ENCODE measurements at regions of chr3 and their contacts with region 1.

Region 1: GRCh38 chr3:5057857-5058324 is 64.2 kb upstream of the ARL8B start:
- DNase-seq: peak; percentile 75
- ATAC-seq: peak; percentile 93
- H3K4me3 ChIP-seq: no peak overlapping the region
- H3K27ac ChIP-seq: no peak overlapping the region
- H3K4me1 ChIP-seq: peaks cover 34% of the 10 kb centered on the region
- H3K27me3 ChIP-seq: no peaks in the 10 kb centered on the region; a peak in 1 of 4 replicates
- CTCF ChIP-seq: peak; percentile 70 to 87 (median 76)
- EP300 ChIP-seq: no peak
- POLR2A ChIP-seq: no peak
- RAD21 ChIP-seq: peak; percentile 99

Region 2: DNA sequence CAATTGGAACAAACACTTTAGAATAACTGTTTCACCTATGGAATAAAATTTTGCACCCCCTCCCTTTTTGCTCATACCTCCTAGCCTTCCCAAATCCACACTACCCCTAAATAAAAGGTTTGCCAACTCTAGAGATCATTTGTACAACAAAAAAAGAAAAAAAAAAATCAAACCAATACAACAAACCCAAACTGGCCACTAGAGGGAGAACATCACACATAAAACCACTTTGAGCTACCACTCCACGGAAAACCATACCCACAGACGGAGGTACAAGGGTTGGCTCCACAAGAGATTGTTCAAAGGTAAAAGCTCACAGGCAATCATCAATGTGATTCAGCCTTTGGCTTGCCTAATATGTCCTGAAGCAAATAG is 707.1 kb before region 1 on chr3:
- CTCF ChIA-PET with region 1: interaction called, 10 read pairs
- POLR2A ChIA-PET with region 1: no interaction called
- RAD21 ChIA-PET with region 1: interaction called, 6 read pairs
- SMC1A ChIA-PET with region 1: interaction called, 3 read pairs
- in situ Hi-C with region 1: loop called (anchors 10 kb)
- intact Hi-C with region 1: loop called (anchors 10 kb)
- DNase-seq: peak; percentile 31
- ATAC-seq: peak; percentile 96
- H3K4me3 ChIP-seq: no peak overlapping the region
- H3K27ac ChIP-seq: no peak overlapping the region
- H3K4me1 ChIP-seq: no peaks in the 10 kb centered on the region
- H3K27me3 ChIP-seq: no peaks in the 10 kb centered on the region
- CTCF ChIP-seq: peak; percentile 64 to 78 (median 73)
- EP300 ChIP-seq: no peak
- POLR2A ChIP-seq: no peak
- RAD21 ChIP-seq: peak; percentile 95

Region 3: GRCh38 chr3:4834403-4834866 is 223.5 kb before region 1 on chr3:
- CTCF ChIA-PET with region 1: no interaction called
- POLR2A ChIA-PET with region 1: no interaction called
- RAD21 ChIA-PET with region 1: interaction called, 4 read pairs
- SMC1A ChIA-PET with region 1: interaction called, 6 read pairs
- in situ Hi-C with region 1: no loop called
- intact Hi-C with region 1: loop called (anchors 2 kb)
- DNase-seq: no peak
- ATAC-seq: peak; percentile 63
- H3K4me3 ChIP-seq: no peak overlapping the region
- H3K27ac ChIP-seq: peak overlapping the region; percentile 43; the same call in 1 of the 2 replicates
- H3K4me1 ChIP-seq: peaks cover 43% of the 10 kb centered on the region
- H3K27me3 ChIP-seq: no peaks in the 10 kb centered on the region
- CTCF ChIP-seq: no peak
- EP300 ChIP-seq: peak; percentile 89 to 95; a peak in 3 of 4 replicates
- POLR2A ChIP-seq: no peak
- RAD21 ChIP-seq: 0 out of 2 replicates have a peak, but pooled peaks have one; percentile 4

Region 4: GRCh38 chr3:4972652-4973643 is 84.9 kb before region 1 on chr3:
- CTCF ChIA-PET with region 1: interaction called, 28 read pairs
- POLR2A ChIA-PET with region 1: interaction called, 9 read pairs
- RAD21 ChIA-PET with region 1: interaction called, 231 read pairs
- SMC1A ChIA-PET with region 1: interaction called, 165 read pairs
- in situ Hi-C with region 1: no loop called
- intact Hi-C with region 1: no loop called
- DNase-seq: peak; percentile 68
- ATAC-seq: peak; percentile 23
- H3K4me3 ChIP-seq: peak overlapping the region; percentile 37; the same call in 1 of the 2 replicates
- H3K27ac ChIP-seq: peak overlapping the region; percentile 45
- H3K4me1 ChIP-seq: peaks cover 29% of the 10 kb centered on the region
- H3K27me3 ChIP-seq: no peaks in the 10 kb centered on the region
- CTCF ChIP-seq: no peak
- EP300 ChIP-seq: peak; percentile 60 to 86; a peak in 3 of 4 replicates
- POLR2A ChIP-seq: no peak
- RAD21 ChIP-seq: no peak

Region 5: GRCh38 chr3:5006755-5007202 is 51.1 kb before region 1 on chr3:
- CTCF ChIA-PET with region 1: interaction called, 4 read pairs
- POLR2A ChIA-PET with region 1: interaction called, 14 read pairs
- RAD21 ChIA-PET with region 1: interaction called, 87 read pairs
- SMC1A ChIA-PET with region 1: interaction called, 60 read pairs
- in situ Hi-C with region 1: no loop called
- intact Hi-C with region 1: loop called (anchors 2 kb)
- DNase-seq: peak; percentile 95
- ATAC-seq: peak; percentile 78
- H3K4me3 ChIP-seq: 0 out of 2 replicates have a peak overlapping the region, but pooled peaks have one; percentile 26
- H3K27ac ChIP-seq: peak overlapping the region; percentile 94
- H3K4me1 ChIP-seq: peaks cover 53% of the 10 kb centered on the region
- H3K27me3 ChIP-seq: no peaks in the 10 kb centered on the region
- CTCF ChIP-seq: peak in 1 of 3 experiments; percentile 24; a peak in 2 of 6 replicates
- EP300 ChIP-seq: peak; percentile 98 to 99
- POLR2A ChIP-seq: peak; percentile 69; the same call in 1 of the 2 replicates
- RAD21 ChIP-seq: peak; percentile 30; the same call in 1 of the 2 replicates

Region 6: GRCh38 chr3:5026331-5027218 is 31.3 kb before region 1 on chr3:
- CTCF ChIA-PET with region 1: interaction called, 14 read pairs
- POLR2A ChIA-PET with region 1: interaction called, 9 read pairs
- RAD21 ChIA-PET with region 1: interaction called, 40 read pairs
- SMC1A ChIA-PET with region 1: interaction called, 181 read pairs
- in situ Hi-C with region 1: no loop called
- intact Hi-C with region 1: loop called (anchors 2 kb)
- DNase-seq: no peak
- ATAC-seq: peak; percentile 83
- H3K4me3 ChIP-seq: peak overlapping the region; percentile 61; the same call in 1 of the 2 replicates
- H3K27ac ChIP-seq: peak overlapping the region; percentile 68
- H3K4me1 ChIP-seq: peaks cover 31% of the 10 kb centered on the region
- H3K27me3 ChIP-seq: no peaks in the 10 kb centered on the region
- CTCF ChIP-seq: peak; percentile 63 to 72 (median 71)
- EP300 ChIP-seq: no peak; a peak in 1 of 4 replicates
- POLR2A ChIP-seq: 0 out of 2 replicates have a peak, but pooled peaks have one; percentile 31
- RAD21 ChIP-seq: peak; percentile 86

Region 7: GRCh38 chr3:5041315-5041714 is 16.6 kb before region 1 on chr3:
- CTCF ChIA-PET with region 1: interaction called, 31 read pairs
- POLR2A ChIA-PET with region 1: interaction called, 8 read pairs
- RAD21 ChIA-PET with region 1: interaction called, 73 read pairs
- SMC1A ChIA-PET with region 1: interaction called, 181 read pairs
- in situ Hi-C with region 1: no loop called
- intact Hi-C with region 1: no loop called
- DNase-seq: no peak
- ATAC-seq: peak; percentile 49
- H3K4me3 ChIP-seq: no peak overlapping the region
- H3K27ac ChIP-seq: no peak overlapping the region
- H3K4me1 ChIP-seq: peaks cover 9% of the 10 kb centered on the region
- H3K27me3 ChIP-seq: no peaks in the 10 kb centered on the region
- CTCF ChIP-seq: 0 out of 6 replicates have a peak, but pooled peaks of 1 of the 3 experiments have one; percentile 18
- EP300 ChIP-seq: no peak
- POLR2A ChIP-seq: no peak
- RAD21 ChIP-seq: no peak

Region 8: GRCh38 chr3:5095879-5096278 is 38.0 kb after region 1 on chr3:
- CTCF ChIA-PET with region 1: no interaction called
- POLR2A ChIA-PET with region 1: no interaction called
- RAD21 ChIA-PET with region 1: no interaction called
- SMC1A ChIA-PET with region 1: no interaction called
- in situ Hi-C with region 1: no loop called
- intact Hi-C with region 1: no loop called
- DNase-seq: no peak
- ATAC-seq: peak; percentile 66
- H3K4me3 ChIP-seq: no peak overlapping the region
- H3K27ac ChIP-seq: no peak overlapping the region
- H3K4me1 ChIP-seq: no peaks in the 10 kb centered on the region
- H3K27me3 ChIP-seq: peaks cover 4 to 5% of the 10 kb centered on the region in 2 experiments; a peak in 3 of 4 replicates
- CTCF ChIP-seq: no peak
- EP300 ChIP-seq: no peak
- POLR2A ChIP-seq: no peak
- RAD21 ChIP-seq: no peak